Mammary epithelial cell (primary cell): ENCODE measurements at regions of chr10 and their contacts with region 1.

Region 1: GRCh38 chr10:95350219-95350829 is 59.5 kb upstream of the PDLIM1 start:
- DNase-seq: no peak
- H3K4me3 ChIP-seq: no peak overlapping the region
- H3K27ac ChIP-seq: no peak overlapping the region
- H3K4me1 ChIP-seq: peaks cover 16% of the 10 kb centered on the region
- H3K27me3 ChIP-seq: no peaks in the 10 kb centered on the region
- CTCF ChIP-seq: no peak

Region 2: GRCh38 chr10:95303535-95303934 is 46.8 kb before region 1 on chr10:
- CTCF ChIA-PET with region 1: no interaction called
- dilution Hi-C with region 1: loop called (anchors 5 kb)
- in situ Hi-C with region 1: no loop called
- intact Hi-C with region 1: no loop called
- DNase-seq: no peak
- H3K4me3 ChIP-seq: no peak overlapping the region
- H3K27ac ChIP-seq: no peak overlapping the region
- H3K4me1 ChIP-seq: peaks cover 9% of the 10 kb centered on the region
- H3K27me3 ChIP-seq: no peaks in the 10 kb centered on the region
- CTCF ChIP-seq: no peak

Region 3: DNA sequence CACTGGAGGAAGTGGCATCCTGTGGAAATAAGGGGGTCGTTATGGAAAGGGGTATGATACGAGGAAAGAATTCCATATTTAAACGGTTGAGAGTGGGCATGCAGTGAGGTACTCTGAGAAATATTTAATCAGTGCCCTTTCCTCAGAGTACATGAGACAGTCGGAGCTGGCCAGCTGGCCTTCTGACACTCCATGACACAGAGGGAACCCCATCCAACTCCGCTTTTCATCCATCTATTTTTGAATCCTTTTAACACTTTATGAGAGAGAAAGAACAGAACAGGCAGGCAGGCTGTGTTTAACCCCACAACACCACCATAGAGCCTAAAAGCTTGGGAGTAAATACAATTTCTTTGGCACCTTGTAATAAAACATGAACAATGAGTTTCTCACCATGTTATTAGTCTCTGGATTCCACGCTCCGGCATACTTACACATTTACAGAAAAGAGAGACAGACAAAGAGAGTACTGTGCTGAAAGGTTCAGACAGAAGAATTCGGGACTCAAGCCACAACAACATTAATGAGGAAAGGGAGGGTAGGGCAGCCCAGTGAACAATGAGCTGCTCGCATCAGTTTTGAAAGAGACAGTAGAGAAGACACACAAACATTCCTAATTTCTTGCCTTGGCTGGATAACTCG is 64.6 kb after region 1 on chr10:
- CTCF ChIA-PET with region 1: no interaction called
- dilution Hi-C with region 1: loop called (anchors 5 kb)
- in situ Hi-C with region 1: no loop called
- intact Hi-C with region 1: no loop called
- DNase-seq: peak; percentile 41
- H3K4me3 ChIP-seq: no peak overlapping the region
- H3K27ac ChIP-seq: no peak overlapping the region
- H3K4me1 ChIP-seq: peaks cover 8% of the 10 kb centered on the region
- H3K27me3 ChIP-seq: no peaks in the 10 kb centered on the region
- CTCF ChIP-seq: no peak